ENCODE measurements at regions of chr4 and their contacts with region 1.

Region 1: GRCh38 chr4:87973283-87974169 is 2.0 kb upstream of the SPP1 start:
- DNase-seq: peak; percentile 30
- H3K4me3 ChIP-seq: no peak overlapping the region
- H3K27ac ChIP-seq: no peak overlapping the region
- H3K4me1 ChIP-seq: peaks cover 0 to 6% (median 0%) of the 10 kb centered on the region in 4 donors
- H3K27me3 ChIP-seq: peaks cover 41% of the 10 kb centered on the region
- CTCF ChIP-seq: peak; percentile 55 to 82 (median 73)
- EP300 ChIP-seq: no peak
- POLR2A ChIP-seq: no peak

Region 2: DNA sequence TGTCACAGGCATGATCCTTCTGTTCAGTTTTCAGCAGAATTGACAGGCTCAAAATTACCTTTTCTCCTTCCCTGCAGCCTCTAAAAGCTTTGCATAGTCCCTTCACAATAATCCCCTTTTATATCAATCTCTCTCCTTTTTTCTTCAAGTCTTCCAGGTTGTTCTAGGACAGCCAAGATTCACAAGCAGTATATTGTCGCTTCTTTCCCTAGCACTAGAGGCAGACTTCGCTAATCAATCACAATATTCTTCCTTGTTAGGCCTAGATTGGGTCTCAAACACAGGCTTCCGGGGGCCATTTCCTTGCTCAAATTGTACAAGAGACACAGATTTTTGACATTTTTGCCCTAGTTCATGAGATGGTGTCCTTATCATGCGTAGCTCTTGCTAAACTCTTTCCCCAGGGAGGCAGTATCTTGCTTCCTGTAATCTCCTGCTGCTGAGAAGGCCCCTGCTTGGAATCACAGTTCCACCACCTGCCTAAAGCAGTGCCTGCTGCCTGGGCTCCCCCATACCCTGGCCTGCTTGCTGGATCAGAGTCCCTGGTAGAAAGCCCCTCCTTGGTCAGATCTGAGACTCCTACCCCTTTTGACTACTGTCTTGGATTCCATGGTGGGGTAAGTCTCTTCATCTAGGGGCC is 266.1 kb before region 1 on chr4:
- in situ Hi-C with region 1: no loop called
- intact Hi-C with region 1: no loop called
- DNase-seq: no peak
- H3K4me3 ChIP-seq: no peak overlapping the region
- H3K27ac ChIP-seq: no peak overlapping the region
- H3K4me1 ChIP-seq: no peaks in the 10 kb centered on the region
- H3K27me3 ChIP-seq: no peaks in the 10 kb centered on the region
- CTCF ChIP-seq: no peak
- EP300 ChIP-seq: no peak
- POLR2A ChIP-seq: no peak

Region 3: GRCh38 chr4:87834401-87834800 is 139.1 kb before region 1 on chr4:
- in situ Hi-C with region 1: no loop called
- intact Hi-C with region 1: no loop called
- DNase-seq: no peak
- H3K4me3 ChIP-seq: no peak overlapping the region
- H3K27ac ChIP-seq: no peak overlapping the region
- H3K4me1 ChIP-seq: no peaks in the 10 kb centered on the region
- H3K27me3 ChIP-seq: no peaks in the 10 kb centered on the region
- CTCF ChIP-seq: no peak
- EP300 ChIP-seq: no peak
- POLR2A ChIP-seq: no peak

Region 4: GRCh38 chr4:87856816-87857215 is 116.7 kb before region 1 on chr4:
- in situ Hi-C with region 1: loop called in 3 of 4 experiments (anchors 5 to 10 kb)
- intact Hi-C with region 1: loop called (anchors 5 kb)
- DNase-seq: no peak
- H3K4me3 ChIP-seq: no peak overlapping the region
- H3K27ac ChIP-seq: no peak overlapping the region
- H3K4me1 ChIP-seq: no peaks in the 10 kb centered on the region
- H3K27me3 ChIP-seq: no peaks in the 10 kb centered on the region
- CTCF ChIP-seq: no peak
- EP300 ChIP-seq: no peak
- POLR2A ChIP-seq: no peak

Measured in transverse colon (tissue), 4 donors.